ENCODE measurements at regions of chr6 and their contacts with region 1.

Region 1: DNA sequence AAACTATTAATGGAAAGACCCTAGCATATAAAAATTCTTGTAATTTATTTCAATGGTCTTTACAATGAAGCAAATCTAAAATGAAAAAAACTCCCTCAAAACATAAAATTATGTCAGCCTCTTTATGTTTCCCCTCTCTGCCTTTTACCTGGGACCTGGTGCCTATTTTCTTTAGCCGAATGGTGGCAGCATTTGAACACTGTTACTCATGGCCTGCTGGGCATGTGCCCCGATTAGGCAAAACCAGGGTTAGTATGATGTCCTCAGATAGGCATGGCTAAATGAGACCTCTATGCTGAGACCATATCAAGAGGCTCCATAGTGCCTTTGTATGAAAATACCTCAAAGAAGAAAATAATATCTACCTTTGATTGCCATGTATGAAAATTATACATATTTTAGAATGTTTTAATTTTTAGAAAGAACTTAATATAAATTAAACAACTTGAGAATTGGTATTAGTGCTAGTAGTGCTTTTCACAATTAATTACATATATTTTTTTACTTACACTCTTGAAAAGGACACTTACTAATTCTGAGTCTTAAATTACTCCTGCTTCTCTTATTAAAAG is 22.5 kb upstream of the C6orf58 start:
- DNase-seq: no peak
- H3K4me3 Mint-ChIP-seq: no peak overlapping the region
- H3K27ac Mint-ChIP-seq: no peak overlapping the region
- H3K4me1 Mint-ChIP-seq: no peaks in the 10 kb centered on the region
- H3K27me3 Mint-ChIP-seq: peaks cover 22% of the 10 kb centered on the region

Region 2: DNA sequence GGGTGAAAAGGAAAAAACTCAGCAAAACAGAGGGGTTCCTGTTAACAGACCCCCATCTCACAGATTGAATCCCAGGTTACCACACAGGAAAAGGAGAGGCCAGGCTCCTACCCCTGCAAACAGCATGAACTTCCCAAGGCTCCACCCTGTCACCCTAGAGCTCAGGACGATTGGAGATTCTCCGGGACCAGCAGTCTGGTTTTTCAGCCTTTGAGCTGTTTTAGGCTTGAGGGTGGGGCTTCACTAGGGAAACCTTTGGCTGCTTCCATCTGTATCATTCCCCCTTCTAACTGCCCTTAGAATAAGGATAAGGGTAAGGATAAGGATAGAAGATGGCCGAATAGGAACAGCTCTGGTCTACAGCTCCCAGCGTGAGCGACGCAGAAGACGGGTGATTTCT is 38.4 kb after region 1 on chr6:
- intact Hi-C with region 1: no loop called
- DNase-seq: no peak
- H3K4me3 Mint-ChIP-seq: no peak overlapping the region
- H3K27ac Mint-ChIP-seq: no peak overlapping the region
- H3K4me1 Mint-ChIP-seq: no peaks in the 10 kb centered on the region
- H3K27me3 Mint-ChIP-seq: peaks cover 8% of the 10 kb centered on the region

Region 3: GRCh38 chr6:127641905-127642304 is 87.4 kb after region 1 on chr6:
- intact Hi-C with region 1: loop called (anchors 5 kb)
- DNase-seq: no peak
- H3K4me3 Mint-ChIP-seq: no peak overlapping the region
- H3K27ac Mint-ChIP-seq: no peak overlapping the region
- H3K4me1 Mint-ChIP-seq: no peaks in the 10 kb centered on the region
- H3K27me3 Mint-ChIP-seq: peaks cover 5% of the 10 kb centered on the region

Region 4: DNA sequence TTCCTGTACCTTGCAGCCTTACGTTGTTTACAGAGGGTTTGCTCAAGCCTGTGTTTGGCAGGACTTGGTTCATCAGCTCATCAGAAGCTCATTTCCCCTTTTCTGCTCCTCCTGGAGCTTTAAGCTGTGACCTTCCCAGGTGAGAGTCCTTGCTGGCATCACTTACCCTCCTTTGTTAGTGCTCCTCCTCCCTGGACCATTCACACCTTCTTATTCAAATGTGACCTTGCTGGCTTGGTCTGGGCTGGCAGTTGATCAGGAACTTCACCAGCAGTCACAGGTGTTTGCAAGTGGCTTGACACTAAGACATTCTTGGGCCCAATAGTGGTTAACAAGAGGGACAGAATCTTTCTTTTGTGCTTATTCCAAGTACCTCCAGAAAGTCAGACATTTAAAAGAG is 171.3 kb after region 1 on chr6:
- intact Hi-C with region 1: no loop called
- DNase-seq: no peak
- H3K4me3 Mint-ChIP-seq: no peak overlapping the region
- H3K27ac Mint-ChIP-seq: no peak overlapping the region
- H3K4me1 Mint-ChIP-seq: no peaks in the 10 kb centered on the region
- H3K27me3 Mint-ChIP-seq: no peaks in the 10 kb centered on the region

Measured in activated T-helper 2 cell treated with anti-CD3 and anti-CD28 coated beads, Interferon-gamma antibody, Interleukin-2, Interleukin-4, amounts not matched to agents 10 μg/mL and 5 μg/mL and 100 μg/mL, durations not matched to agents 14 hours and 24 hours and 36 hours (primary cell).